GM12878 (cell line): ENCODE measurements at regions of chr3 and their contacts with region 1.

Region 1: GRCh38 chr3:108477511-108478147 is 32.8 kb downstream of the MYH15 start:
- DNase-seq: peak; percentile 12
- ATAC-seq: peak; percentile 89
- H3K4me3 ChIP-seq: no peak overlapping the region
- H3K27ac ChIP-seq: no peak overlapping the region
- H3K4me1 ChIP-seq: no peaks in the 10 kb centered on the region
- H3K27me3 ChIP-seq: no peaks in the 10 kb centered on the region
- CTCF ChIP-seq: peak; percentile 66 to 70 (median 69)
- EP300 ChIP-seq: no peak
- POLR2A ChIP-seq: no peak
- RAD21 ChIP-seq: peak; percentile 86

Region 2: DNA sequence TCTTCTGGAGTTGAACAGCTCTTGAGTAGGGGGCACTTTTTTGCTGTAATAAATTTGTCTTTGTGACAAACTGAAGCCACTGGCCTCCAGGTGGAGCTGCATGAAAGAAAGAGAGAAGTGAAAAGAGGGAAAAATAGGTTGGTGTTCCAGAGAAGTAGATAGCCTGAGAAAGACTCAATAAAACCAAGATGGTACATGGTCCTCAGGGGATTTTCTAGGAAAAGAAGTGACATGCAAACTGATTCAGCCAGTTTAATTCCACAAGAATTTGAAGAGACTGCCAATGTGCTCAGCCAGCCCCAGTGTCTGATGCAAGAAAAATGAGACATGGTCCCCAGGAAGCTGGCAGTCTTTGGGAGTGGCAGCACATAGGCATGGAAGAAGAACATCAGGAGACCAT is 539.5 kb before region 1 on chr3:
- CTCF ChIA-PET with region 1: interaction called, 12 read pairs
- POLR2A ChIA-PET with region 1: no interaction called
- RAD21 ChIA-PET with region 1: no interaction called
- SMC1A ChIA-PET with region 1: interaction called, 3 read pairs
- in situ Hi-C with region 1: no loop called
- intact Hi-C with region 1: loop called (anchors 1 kb)
- DNase-seq: no peak
- ATAC-seq: no peak
- H3K4me3 ChIP-seq: no peak overlapping the region
- H3K27ac ChIP-seq: no peak overlapping the region
- H3K4me1 ChIP-seq: no peaks in the 10 kb centered on the region
- H3K27me3 ChIP-seq: no peaks in the 10 kb centered on the region; a peak in 1 of 4 replicates
- CTCF ChIP-seq: peak; percentile 19 to 47 (median 25); a peak in 4 of 6 replicates
- EP300 ChIP-seq: no peak
- POLR2A ChIP-seq: no peak
- RAD21 ChIP-seq: peak; percentile 62

Region 3: GRCh38 chr3:108159865-108160264 is 317.8 kb before region 1 on chr3:
- CTCF ChIA-PET with region 1: interaction called, 11 read pairs
- POLR2A ChIA-PET with region 1: no interaction called
- RAD21 ChIA-PET with region 1: no interaction called
- SMC1A ChIA-PET with region 1: interaction called, 13 read pairs
- in situ Hi-C with region 1: no loop called
- intact Hi-C with region 1: no loop called
- DNase-seq: no peak
- ATAC-seq: no peak
- H3K4me3 ChIP-seq: no peak overlapping the region
- H3K27ac ChIP-seq: no peak overlapping the region
- H3K4me1 ChIP-seq: no peaks in the 10 kb centered on the region
- H3K27me3 ChIP-seq: no peaks in the 10 kb centered on the region
- CTCF ChIP-seq: no peak
- EP300 ChIP-seq: no peak
- POLR2A ChIP-seq: no peak
- RAD21 ChIP-seq: no peak

Region 4: GRCh38 chr3:108437440-108437839 is 40.2 kb before region 1 on chr3:
- CTCF ChIA-PET with region 1: interaction called, 10 read pairs
- POLR2A ChIA-PET with region 1: no interaction called
- RAD21 ChIA-PET with region 1: no interaction called
- SMC1A ChIA-PET with region 1: interaction called, 5 read pairs
- in situ Hi-C with region 1: no loop called
- intact Hi-C with region 1: no loop called
- DNase-seq: no peak
- ATAC-seq: no peak
- H3K4me3 ChIP-seq: no peak overlapping the region
- H3K27ac ChIP-seq: no peak overlapping the region
- H3K4me1 ChIP-seq: no peaks in the 10 kb centered on the region
- H3K27me3 ChIP-seq: no peaks in the 10 kb centered on the region
- CTCF ChIP-seq: no peak
- EP300 ChIP-seq: no peak
- POLR2A ChIP-seq: no peak
- RAD21 ChIP-seq: no peak

Region 5: DNA sequence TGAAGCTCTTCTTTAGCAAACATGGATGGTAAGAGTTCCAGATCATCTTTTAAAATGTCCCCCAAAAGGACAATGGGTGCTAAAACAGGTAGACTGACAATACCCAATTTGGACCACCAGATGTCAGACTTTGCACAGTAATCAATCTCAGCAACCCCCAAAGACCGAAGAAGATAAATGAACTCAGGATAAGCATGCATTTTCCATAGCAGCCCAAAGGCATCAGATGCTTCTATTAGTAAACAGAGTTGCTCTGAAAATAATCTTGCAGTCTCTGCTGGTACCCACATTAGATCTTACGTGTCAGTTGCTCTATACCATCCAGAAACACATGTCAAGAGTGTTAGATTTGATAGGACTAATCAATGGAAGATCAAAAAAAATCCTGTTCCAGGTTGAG is 12.1 kb after region 1 on chr3:
- CTCF ChIA-PET with region 1: interaction called, 30 read pairs
- POLR2A ChIA-PET with region 1: no interaction called
- RAD21 ChIA-PET with region 1: interaction called, 4 read pairs
- SMC1A ChIA-PET with region 1: interaction called, 6 read pairs
- in situ Hi-C with region 1: no loop called
- intact Hi-C with region 1: no loop called
- DNase-seq: peak; percentile 31
- ATAC-seq: peak; percentile 90
- H3K4me3 ChIP-seq: no peak overlapping the region
- H3K27ac ChIP-seq: no peak overlapping the region
- H3K4me1 ChIP-seq: no peaks in the 10 kb centered on the region
- H3K27me3 ChIP-seq: no peaks in the 10 kb centered on the region
- CTCF ChIP-seq: peak; percentile 69 to 79 (median 70)
- EP300 ChIP-seq: no peak
- POLR2A ChIP-seq: no peak
- RAD21 ChIP-seq: peak; percentile 97